SK-N-SH (cell line): ENCODE measurements at regions of chr1 and their contacts with region 1.

Region 1: DNA sequence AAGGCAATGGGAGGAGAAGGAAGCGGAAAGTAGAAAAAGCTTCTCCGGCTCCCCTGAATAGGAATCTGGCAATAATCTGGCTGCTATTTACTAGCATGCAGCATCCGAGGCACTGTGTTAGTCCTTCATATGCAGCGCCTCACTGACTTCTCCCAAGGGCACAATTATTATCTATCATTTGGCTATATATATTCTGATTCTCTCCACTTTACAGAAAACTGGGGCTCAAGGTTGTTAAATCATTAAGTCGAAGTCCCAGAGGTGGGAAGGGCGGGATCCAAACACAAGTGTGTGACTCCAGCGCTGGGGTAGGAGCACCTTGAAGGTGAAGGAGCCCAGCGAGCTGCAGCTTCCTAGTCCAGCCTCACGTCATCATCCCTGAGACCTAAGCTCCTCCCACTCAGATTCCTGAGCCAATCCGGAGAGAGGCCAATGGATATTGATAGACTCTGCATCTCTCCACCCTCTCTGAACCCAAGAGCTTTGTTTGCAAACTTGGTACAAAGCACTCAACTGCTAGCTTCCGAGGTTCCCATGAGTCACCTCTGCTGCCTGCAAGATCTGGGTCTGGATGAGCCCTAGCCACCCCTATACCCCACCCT is 16.6 kb upstream of the EYA3 start:
- DNase-seq: peak; percentile 30
- H3K4me3 ChIP-seq: no peak overlapping the region
- H3K27ac ChIP-seq: no peak overlapping the region
- H3K4me1 ChIP-seq: 0 out of 4 replicates have a peak, but pooled peaks cover 0 to 7% of the 10 kb centered on the region in 2 experiments
- H3K27me3 ChIP-seq: no peaks in the 10 kb centered on the region
- CTCF ChIP-seq: no peak
- EP300 ChIP-seq: no peak
- RAD21 ChIP-seq: no peak

Region 2: GRCh38 chr1:27979151-27979858 is 125.7 kb before region 1 on chr1:
- CTCF ChIA-PET with region 1: no interaction called
- POLR2A ChIA-PET with region 1: no interaction called
- DNase-seq: no peak
- H3K4me3 ChIP-seq: no peak overlapping the region
- H3K27ac ChIP-seq: no peak overlapping the region
- H3K4me1 ChIP-seq: no peaks in the 10 kb centered on the region; a peak in 1 of 4 replicates
- H3K27me3 ChIP-seq: no peaks in the 10 kb centered on the region
- CTCF ChIP-seq: peak; percentile 69
- EP300 ChIP-seq: no peak
- RAD21 ChIP-seq: peak; percentile 68

Region 3: DNA sequence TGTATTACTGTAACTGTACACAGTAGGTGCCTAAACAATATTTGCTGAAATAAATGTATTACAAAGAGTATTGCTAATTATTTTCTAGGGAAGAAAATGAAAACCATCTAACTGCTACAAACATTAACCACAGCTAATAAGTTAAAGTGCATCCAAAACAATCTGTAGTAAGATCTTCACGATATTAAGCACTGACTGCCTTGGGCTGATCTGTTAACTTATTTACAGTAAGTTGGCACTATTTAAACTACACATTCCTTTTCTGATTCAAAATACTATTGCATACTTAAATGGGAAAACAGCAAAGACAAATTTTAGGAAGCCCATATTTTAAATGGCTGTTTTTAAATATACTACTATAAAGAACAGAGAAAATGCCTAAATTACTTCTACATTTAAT is 21.1 kb before region 1 on chr1:
- CTCF ChIA-PET with region 1: no interaction called
- POLR2A ChIA-PET with region 1: no interaction called
- DNase-seq: no peak
- H3K4me3 ChIP-seq: no peak overlapping the region
- H3K27ac ChIP-seq: no peak overlapping the region
- H3K4me1 ChIP-seq: peaks cover 16 to 21% of the 10 kb centered on the region in 2 experiments; a peak in 3 of 4 replicates
- H3K27me3 ChIP-seq: no peaks in the 10 kb centered on the region
- CTCF ChIP-seq: no peak
- EP300 ChIP-seq: no peak
- RAD21 ChIP-seq: no peak

Region 4: DNA sequence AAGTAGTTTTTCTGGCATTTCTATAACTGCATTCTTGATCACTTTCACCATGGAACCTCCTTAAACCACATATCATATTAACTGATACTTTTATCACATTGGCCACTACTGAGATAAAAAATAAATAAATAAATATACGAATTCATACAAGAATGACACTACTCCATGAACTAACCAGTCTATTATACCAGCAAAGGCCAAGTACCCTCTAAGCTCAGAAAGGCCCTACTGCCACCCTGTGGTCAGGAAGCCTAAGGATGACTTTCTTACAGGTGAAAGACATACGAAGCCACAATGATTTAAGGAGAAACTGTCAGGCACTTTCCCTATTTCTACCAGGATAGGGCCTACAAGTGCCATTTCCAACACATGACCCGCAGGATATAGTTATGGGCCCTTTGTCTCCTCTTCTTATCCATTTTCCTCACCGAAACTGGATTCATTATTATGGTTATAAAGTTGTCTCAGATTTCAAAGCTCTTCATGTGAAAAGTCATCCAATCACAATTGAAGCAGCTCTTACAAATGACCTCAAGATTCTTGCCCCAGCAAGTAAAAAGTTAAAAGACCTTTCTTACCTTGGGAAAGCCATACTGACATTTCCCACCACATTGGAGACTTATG is 104.0 kb after region 1 on chr1:
- CTCF ChIA-PET with region 1: interaction called, 15 read pairs
- POLR2A ChIA-PET with region 1: no interaction called
- DNase-seq: peak; percentile 59
- H3K4me3 ChIP-seq: peak overlapping the region in 1 of 2 experiments; percentile 30; a peak in 1 of 4 replicates
- H3K27ac ChIP-seq: no peak overlapping the region
- H3K4me1 ChIP-seq: no peaks in the 10 kb centered on the region
- H3K27me3 ChIP-seq: no peaks in the 10 kb centered on the region
- CTCF ChIP-seq: peak; percentile 80
- EP300 ChIP-seq: no peak
- RAD21 ChIP-seq: peak; percentile 91